Heart right ventricle (tissue), 16 donors: ENCODE measurements at regions of chr3 and their contacts with region 1.

Region 1: DNA sequence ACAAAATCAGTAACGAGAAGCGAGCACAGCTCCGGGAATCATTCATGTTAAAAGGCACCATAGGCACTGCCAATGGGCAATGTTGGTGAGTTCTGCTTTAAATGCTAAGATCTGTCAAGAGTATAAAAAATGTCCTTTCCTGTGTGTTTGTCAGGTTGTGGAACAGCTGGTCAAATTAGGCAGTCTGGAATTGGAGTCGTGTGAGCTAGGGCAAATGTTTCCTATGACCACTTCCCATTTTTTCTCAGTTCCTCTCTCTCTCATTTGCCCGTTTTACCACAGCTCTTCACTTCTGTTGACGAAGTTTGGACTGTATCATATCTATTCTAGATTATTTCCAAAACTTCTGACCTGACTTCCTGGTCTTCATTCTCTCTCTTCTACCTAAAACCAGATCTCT is 60.8 kb upstream of the GOLIM4 start:
- DNase-seq: no peak
- ATAC-seq: peak in 5 of 8 donors; percentile 52 to 76 (median 62)
- H3K4me3 ChIP-seq: no peak overlapping the region
- H3K27ac ChIP-seq: no peak overlapping the region
- H3K4me1 ChIP-seq: peaks cover 0 to 3% (median 0%) of the 10 kb centered on the region in 9 donors
- H3K27me3 ChIP-seq: no peaks in the 10 kb centered on the region
- CTCF ChIP-seq: no peak

Region 2: DNA sequence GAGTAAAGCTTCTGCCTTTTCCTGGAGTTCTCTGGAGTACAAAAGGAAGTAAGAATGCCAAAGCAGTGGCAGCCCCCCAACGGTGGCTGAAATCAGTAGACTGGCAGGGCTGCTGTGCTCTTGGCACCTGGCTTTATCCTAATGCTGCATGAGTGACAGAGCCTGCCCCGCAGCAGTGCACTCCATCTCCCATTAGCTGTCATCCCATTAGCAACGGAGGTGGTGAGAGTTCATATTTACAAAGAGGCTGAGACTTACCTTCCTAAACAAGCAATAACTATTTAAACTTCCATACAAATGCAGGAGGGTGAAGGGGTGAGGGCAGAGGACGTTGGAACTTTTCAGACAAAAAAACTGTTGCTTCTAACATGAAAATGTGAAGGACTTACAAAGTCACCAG is 369.0 kb before region 1 on chr3:
- intact Hi-C with region 1: no loop called
- DNase-seq: no peak
- ATAC-seq: peak in 1 of 8 donors; percentile 73
- H3K4me3 ChIP-seq: no peak overlapping the region
- H3K27ac ChIP-seq: no peak overlapping the region
- H3K4me1 ChIP-seq: peaks cover 0 to 31% (median 14%) of the 10 kb centered on the region in 9 donors
- H3K27me3 ChIP-seq: no peaks in the 10 kb centered on the region
- CTCF ChIP-seq: no peak

Region 3: GRCh38 chr3:168024537-168024941 is 131.9 kb before region 1 on chr3:
- intact Hi-C with region 1: no loop called
- DNase-seq: peak in 1 of 2 donors; percentile 27
- ATAC-seq: peak in 7 of 8 donors; percentile 44 to 97 (median 88)
- H3K4me3 ChIP-seq: no peak overlapping the region
- H3K27ac ChIP-seq: peak overlapping the region; percentile 7 to 86 (median 73)
- H3K4me1 ChIP-seq: peaks cover 0 to 51% (median 25%) of the 10 kb centered on the region in 9 donors
- H3K27me3 ChIP-seq: no peaks in the 10 kb centered on the region
- CTCF ChIP-seq: no peak

Region 4: GRCh38 chr3:168100777-168101492 is 55.5 kb before region 1 on chr3:
- intact Hi-C with region 1: loop called in 4 of 10 experiments (anchors 5 to 10 kb)
- DNase-seq: no peak
- ATAC-seq: no peak
- H3K4me3 ChIP-seq: no peak overlapping the region
- H3K27ac ChIP-seq: no peak overlapping the region
- H3K4me1 ChIP-seq: peaks cover 0 to 10% (median 7%) of the 10 kb centered on the region in 9 donors
- H3K27me3 ChIP-seq: no peaks in the 10 kb centered on the region
- CTCF ChIP-seq: no peak